H1 (cell line): ENCODE measurements at regions of chr14 and their contacts with region 1.

Region 1: DNA sequence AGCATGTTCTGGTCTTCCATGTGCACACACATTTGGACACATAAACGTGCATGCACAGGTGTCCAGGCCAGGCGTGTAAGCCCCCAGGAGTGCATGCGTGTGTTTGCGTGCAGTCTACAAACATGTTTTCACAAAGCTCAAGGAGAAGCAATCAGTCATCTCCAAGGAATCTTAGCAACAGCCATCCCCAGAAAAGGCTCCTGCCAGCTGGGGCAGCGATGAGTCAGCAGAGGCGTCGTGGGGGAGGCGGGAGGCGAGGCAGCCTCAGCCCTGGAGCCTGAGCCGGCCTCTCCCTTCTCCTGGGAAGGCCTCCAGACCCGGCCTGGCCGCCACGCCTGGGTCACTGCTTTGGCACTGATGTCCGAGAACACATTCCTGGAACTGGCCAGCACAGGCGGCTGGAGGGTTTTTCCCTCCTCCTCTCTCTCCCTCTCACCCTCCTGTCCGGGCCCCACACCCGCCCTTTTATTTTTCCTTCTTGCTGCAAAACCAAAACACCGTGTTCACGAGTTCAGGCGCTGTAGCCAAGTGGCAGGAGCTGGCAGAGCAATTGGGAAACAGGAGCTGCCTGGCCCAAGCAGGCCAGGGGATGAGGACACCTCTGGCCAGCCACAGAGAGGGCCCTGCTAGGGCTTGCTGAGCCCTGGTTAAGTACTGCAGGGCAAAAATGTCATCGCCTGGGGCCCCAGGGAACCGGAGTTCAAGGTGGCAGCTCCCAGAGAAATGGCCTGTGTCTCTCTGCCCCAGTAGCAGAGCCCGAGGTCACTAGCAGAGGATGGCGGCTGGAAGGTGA is 92.7 kb downstream of the LRRC74A start:
- DNase-seq: no peak
- H3K4me3 ChIP-seq: 0 out of 8 replicates have a peak overlapping the region, but pooled peaks of 1 of the 4 experiments have one; percentile 5
- H3K27ac ChIP-seq: peak overlapping the region; percentile 53; the same call in 1 of the 2 replicates
- H3K4me1 ChIP-seq: peaks cover 17 to 53% (median 42%) of the 10 kb centered on the region in 4 experiments
- H3K27me3 ChIP-seq: no peaks in the 10 kb centered on the region
- CTCF ChIP-seq: peak in 2 of 3 experiments; percentile 8 to 17; a peak in 1 of 4 replicates
- EP300 ChIP-seq: no peak
- POLR2A ChIP-seq: no peak
- RAD21 ChIP-seq: no peak

Region 2: GRCh38 chr14:76904740-76905438 is 14.1 kb before region 1 on chr14:
- CTCF ChIA-PET with region 1: interaction called, 403 read pairs
- POLR2A ChIA-PET with region 1: interaction called, 7 read pairs
- DNase-seq: no peak
- H3K4me3 ChIP-seq: no peak overlapping the region
- H3K27ac ChIP-seq: no peak overlapping the region
- H3K4me1 ChIP-seq: peaks cover 0 to 3% (median 1%) of the 10 kb centered on the region in 4 experiments; a peak in 1 of 7 replicates
- H3K27me3 ChIP-seq: no peaks in the 10 kb centered on the region
- CTCF ChIP-seq: no peak
- EP300 ChIP-seq: no peak
- POLR2A ChIP-seq: no peak
- RAD21 ChIP-seq: no peak

Region 3: DNA sequence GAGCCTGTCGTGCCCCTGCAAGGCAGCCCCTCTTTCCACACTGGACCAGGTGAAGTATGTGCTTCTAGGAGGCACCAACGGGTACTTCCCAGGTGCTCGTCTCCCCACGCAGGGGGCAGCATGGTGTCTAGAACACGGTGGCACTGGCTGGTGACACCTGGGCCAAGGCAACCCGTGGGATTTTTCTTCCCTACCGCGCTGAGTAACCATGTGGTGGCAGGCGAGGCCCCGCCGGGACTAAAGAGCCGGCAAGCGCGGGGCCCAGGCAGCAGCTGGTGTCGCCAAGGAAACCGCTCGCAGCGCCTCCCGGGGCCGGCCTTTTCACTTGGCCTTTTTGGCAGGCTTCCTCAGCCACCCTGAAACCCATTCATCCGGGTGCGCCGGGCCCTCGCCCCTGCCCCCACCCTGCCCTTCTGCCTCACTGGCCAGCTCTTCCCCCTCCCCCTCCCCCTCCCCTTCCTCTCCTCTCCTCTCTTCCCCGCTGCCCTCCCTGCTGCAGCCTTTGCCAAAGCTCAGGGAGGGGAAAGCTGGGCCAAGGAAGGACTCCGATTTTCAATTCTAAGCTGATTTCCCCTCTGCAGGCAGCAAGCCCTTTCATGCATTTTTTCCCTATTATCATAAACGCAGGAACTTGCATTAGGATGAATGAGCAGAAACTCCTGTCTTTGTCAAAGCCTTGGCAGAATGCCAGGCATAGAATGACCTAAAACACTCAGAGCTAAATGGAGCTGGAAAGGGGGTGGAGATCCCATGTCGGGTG is 28.3 kb after region 1 on chr14:
- CTCF ChIA-PET with region 1: interaction called, 403 read pairs
- POLR2A ChIA-PET with region 1: interaction called, 10 read pairs
- DNase-seq: peak; percentile 84 to 93
- H3K4me3 ChIP-seq: peak overlapping the region in 3 of 4 experiments; percentile 20 to 45 (median 27); a peak in 5 of 8 replicates
- H3K27ac ChIP-seq: peak overlapping the region; percentile 71
- H3K4me1 ChIP-seq: peaks cover 16 to 20% (median 19%) of the 10 kb centered on the region in 4 experiments
- H3K27me3 ChIP-seq: no peaks in the 10 kb centered on the region
- CTCF ChIP-seq: peak; percentile 35 to 42 (median 38)
- EP300 ChIP-seq: peak in 1 of 2 experiments; percentile 41; a peak in 1 of 3 replicates
- POLR2A ChIP-seq: no peak
- RAD21 ChIP-seq: peak; percentile 53 to 67

Region 4: GRCh38 chr14:76968621-76969063 is 49.7 kb after region 1 on chr14:
- CTCF ChIA-PET with region 1: interaction called, 151 read pairs
- POLR2A ChIA-PET with region 1: interaction called, 3 read pairs
- DNase-seq: no peak
- H3K4me3 ChIP-seq: no peak overlapping the region
- H3K27ac ChIP-seq: peak overlapping the region; percentile 56; the same call in 1 of the 2 replicates
- H3K4me1 ChIP-seq: peaks cover 0 to 33% (median 17%) of the 10 kb centered on the region in 4 experiments; a peak in 6 of 7 replicates
- H3K27me3 ChIP-seq: no peaks in the 10 kb centered on the region
- CTCF ChIP-seq: peak in 2 of 3 experiments; percentile 23 to 25; a peak in 2 of 4 replicates
- EP300 ChIP-seq: no peak
- POLR2A ChIP-seq: no peak
- RAD21 ChIP-seq: peak; percentile 26 to 41; a peak in 3 of 4 replicates

Region 5: DNA sequence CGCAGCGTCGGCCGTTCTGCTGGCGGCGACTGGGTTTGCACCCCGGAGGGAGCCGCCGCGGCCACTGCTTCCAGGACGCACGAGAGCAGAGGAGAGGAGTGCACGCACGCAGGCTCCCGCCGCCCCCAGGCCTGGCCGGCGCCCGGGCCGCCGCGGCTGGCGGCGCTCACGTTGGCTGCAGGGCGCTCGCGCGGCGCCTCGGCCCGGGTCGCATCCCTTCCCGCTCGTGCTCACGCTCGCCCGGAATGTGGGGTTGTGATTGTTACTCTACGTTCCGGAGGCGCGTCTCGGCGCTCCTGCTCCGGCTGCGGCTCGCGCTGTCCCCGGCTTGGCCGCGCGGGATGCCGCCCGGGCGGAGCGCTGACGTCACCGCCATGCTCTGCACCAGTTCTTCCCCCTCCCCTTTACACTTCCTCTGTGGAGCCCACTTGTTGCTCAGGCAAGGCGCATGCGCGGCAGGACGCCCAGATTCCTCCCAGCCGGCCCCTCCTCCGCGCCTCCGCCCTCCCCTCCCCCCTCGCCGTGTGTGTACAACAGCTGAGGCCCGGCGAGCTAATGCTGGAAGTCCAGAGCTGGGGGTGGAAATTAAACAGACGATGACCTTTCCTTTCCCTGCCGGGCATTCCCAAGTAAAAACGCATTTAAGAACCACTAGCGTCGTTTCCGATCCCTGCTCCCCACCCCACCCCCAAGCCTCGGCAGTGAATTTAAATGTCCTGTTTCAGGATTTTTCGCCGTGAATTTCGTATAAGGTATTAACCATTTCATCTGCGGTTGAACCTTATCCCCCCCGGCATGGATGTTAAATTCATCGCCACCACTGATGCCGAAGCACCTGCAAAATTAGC is 109.7 kb after region 1 on chr14 and contains the start of gene IRF2BPL:
- CTCF ChIA-PET with region 1: interaction called, 280 read pairs
- POLR2A ChIA-PET with region 1: interaction called, 78 read pairs
- DNase-seq: peak in 1 of 2 experiments; percentile 88
- H3K4me3 ChIP-seq: peak within 1 kb of the TSS; percentile 61 to 86 (median 70)
- H3K27ac ChIP-seq: peak within 1 kb of the TSS; percentile 91
- H3K4me1 ChIP-seq: peaks cover 6 to 40% (median 27%) of the 10 kb centered on the region in 4 experiments
- H3K27me3 ChIP-seq: peaks cover 0 to 5% (median 3%) of the 10 kb centered on the region in 4 experiments; a peak in 5 of 7 replicates
- CTCF ChIP-seq: no peak
- EP300 ChIP-seq: 0 out of 3 replicates have a peak, but pooled peaks of 1 of the 2 experiments have one; percentile 42
- POLR2A ChIP-seq: peak in 1 of 2 experiments; percentile 85; a peak in 2 of 3 replicates
- RAD21 ChIP-seq: peak; percentile 0 to 1; a peak in 2 of 4 replicates
- total RNA-seq, gene IRF2BPL: 57.0 and 59.6 TPM in 2 replicates

Region 6: DNA sequence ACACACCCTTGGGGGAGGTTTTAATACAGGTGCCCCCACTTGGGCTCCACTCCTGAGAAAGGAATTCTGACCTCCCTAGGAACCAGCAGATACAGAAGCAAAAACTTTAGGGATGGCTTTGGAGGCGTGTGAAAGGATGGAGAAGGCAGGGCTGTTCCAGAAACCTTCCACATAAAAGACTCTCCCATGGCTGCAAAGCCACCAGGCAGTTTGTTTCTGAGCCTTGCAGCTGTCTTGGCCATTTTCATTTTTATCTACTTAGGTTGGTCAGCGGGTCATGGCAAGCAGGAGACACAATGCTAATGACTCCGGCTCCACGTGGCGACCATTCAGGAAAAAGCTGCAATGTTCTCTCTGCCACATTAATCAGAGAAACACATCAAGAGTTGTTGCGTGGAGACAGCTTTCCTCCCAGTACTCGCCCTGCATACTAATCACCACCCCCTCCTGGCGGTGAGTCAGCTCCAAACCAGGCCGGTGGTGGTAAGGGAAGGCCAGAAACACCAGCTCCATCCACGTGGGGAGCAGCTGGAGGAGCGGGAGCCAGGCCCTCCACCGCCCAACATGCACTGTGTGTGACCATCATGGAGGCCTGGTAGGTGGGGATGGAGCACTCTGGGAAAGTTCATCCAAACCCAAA is 140.4 kb after region 1 on chr14:
- CTCF ChIA-PET with region 1: interaction called, 237 read pairs
- POLR2A ChIA-PET with region 1: interaction called, 3 read pairs
- DNase-seq: no peak
- H3K4me3 ChIP-seq: no peak overlapping the region
- H3K27ac ChIP-seq: no peak overlapping the region
- H3K4me1 ChIP-seq: peaks cover 3 to 12% (median 4%) of the 10 kb centered on the region in 4 experiments; a peak in 5 of 7 replicates
- H3K27me3 ChIP-seq: no peaks in the 10 kb centered on the region
- CTCF ChIP-seq: peak; percentile 46 to 60 (median 55)
- EP300 ChIP-seq: no peak
- POLR2A ChIP-seq: no peak
- RAD21 ChIP-seq: peak; percentile 47 to 56; a peak in 3 of 4 replicates

Region 7: DNA sequence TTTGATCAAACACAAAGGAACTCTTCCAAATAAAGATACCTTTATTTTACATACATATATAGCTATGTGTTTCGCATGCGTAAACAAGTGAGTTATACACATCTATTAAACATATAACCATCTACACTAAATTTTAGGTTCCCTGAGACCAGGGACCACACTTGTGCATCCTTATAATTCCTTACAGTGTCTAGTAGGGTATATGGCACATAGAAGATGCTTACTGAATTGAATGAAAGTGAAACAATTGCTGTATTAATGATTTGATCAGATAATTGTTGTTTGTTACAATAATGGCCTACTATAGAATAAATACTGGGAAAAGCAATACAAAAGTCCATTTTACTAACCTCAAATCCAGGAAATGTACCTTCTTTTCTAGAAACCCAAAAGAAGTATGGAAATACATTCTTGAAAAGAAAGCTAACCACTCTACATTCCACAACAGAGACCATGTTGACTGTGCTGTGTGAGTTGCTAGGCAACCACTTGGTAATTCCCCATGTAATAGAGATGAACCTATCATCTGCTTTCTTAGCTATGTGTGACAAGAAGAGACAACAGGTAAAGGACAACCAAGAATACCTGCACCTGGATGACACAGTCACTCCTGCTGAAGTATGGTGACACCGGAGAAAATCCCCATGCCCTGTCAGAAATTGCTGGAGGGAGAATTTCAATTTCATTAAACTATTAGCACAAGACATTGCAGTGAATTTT is 167.2 kb after region 1 on chr14:
- CTCF ChIA-PET with region 1: interaction called, 11 read pairs
- POLR2A ChIA-PET with region 1: interaction called, 3 read pairs
- DNase-seq: no peak
- H3K4me3 ChIP-seq: no peak overlapping the region
- H3K27ac ChIP-seq: peak overlapping the region; percentile 54
- H3K4me1 ChIP-seq: peaks cover 10 to 30% (median 19%) of the 10 kb centered on the region in 4 experiments
- H3K27me3 ChIP-seq: no peaks in the 10 kb centered on the region
- CTCF ChIP-seq: no peak
- EP300 ChIP-seq: peak in 1 of 2 experiments; percentile 90; a peak in 2 of 3 replicates
- POLR2A ChIP-seq: no peak; a peak in 1 of 3 replicates
- RAD21 ChIP-seq: no peak